ENCODE measurements at regions of chr6 and their contacts with region 1.

Region 1: GRCh38 chr6:21593412-21593926 is at the start of gene SOX4:
- DNase-seq: peak; percentile 27 to 80 (median 65)
- ATAC-seq: peak; percentile 78
- H3K4me3 ChIP-seq: peak within 1 kb of the TSS; percentile 59
- H3K4me3 Mint-ChIP-seq: peak within 1 kb of the TSS in 6 of 10 donors; percentile 89 to 93 (median 92)
- H3K27ac ChIP-seq: peak within 1 kb of the TSS; percentile 41
- H3K27ac Mint-ChIP-seq: peak within 1 kb of the TSS in 6 of 9 donors; percentile 43 to 87 (median 80)
- H3K4me1 ChIP-seq: peaks cover 18 to 21% of the 10 kb centered on the region in 2 donors
- H3K4me1 Mint-ChIP-seq: peaks cover 12 to 31% (median 27%) of the 10 kb centered on the region in 7 donors
- H3K27me3 ChIP-seq: peaks cover 10 to 28% of the 10 kb centered on the region in 2 donors
- H3K27me3 Mint-ChIP-seq: peaks cover 40 to 51% (median 45%) of the 10 kb centered on the region in 5 donors
- total RNA-seq, gene SOX4: 0.73 to 11.0 (median 1.4) TPM

Region 2: DNA sequence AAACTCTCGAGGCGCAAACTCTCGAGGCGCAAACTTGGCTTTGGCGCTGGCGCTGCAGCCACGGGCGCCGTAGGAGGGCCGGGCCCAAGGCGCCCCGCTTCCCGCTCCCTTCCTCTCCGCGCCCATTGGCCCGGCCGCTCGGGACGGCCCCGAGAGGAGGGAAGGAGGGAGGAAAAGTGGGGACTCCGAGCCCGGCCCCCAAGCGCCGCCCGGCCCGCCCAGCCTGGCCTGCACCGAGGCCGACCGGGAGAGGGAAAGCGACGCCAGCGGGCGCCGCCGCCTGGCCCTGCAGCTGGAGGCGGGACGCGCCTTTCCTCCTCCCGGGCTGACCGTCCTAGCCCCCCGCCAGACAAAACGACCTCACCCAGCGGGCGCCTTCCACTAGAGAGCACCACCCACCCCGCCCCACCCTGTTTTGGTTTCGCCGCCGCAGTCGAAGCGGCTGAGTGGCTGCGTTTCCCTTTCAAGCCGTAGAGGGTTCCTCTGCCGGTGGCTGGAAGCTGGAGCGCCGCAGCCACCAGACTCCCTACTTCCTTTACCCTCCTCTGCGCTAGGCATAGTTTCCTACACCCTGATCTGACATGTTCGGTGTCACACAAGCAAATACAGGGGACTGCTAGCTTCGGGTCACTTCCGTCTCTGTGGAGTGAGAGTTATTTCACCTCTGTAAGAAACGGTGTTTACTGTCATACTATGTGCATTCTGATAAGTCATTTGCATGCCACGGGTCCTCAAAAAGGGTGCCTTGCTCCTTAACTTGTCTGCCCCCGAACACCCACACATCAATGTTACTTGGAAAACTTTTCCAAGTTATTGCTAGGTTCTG is 1380.9 kb before region 1 on chr6 and contains the start of gene MBOAT1:
- CTCF ChIA-PET with region 1: no interaction called
- POLR2A ChIA-PET with region 1: no interaction called
- intact Hi-C with region 1: loop called (anchors 2 to 5 kb)
- DNase-seq: peak; percentile 38 to 85 (median 54)
- ATAC-seq: peak; percentile 82
- H3K4me3 ChIP-seq: peak within 1 kb of the TSS; percentile 73
- H3K4me3 Mint-ChIP-seq: peak within 1 kb of the TSS; percentile 82 to 99 (median 96)
- H3K27ac ChIP-seq: peak within 1 kb of the TSS; percentile 62
- H3K27ac Mint-ChIP-seq: peak within 1 kb of the TSS; percentile 56 to 94 (median 91)
- H3K4me1 ChIP-seq: peaks cover 11 to 20% of the 10 kb centered on the region in 2 donors
- H3K4me1 Mint-ChIP-seq: peaks cover 18 to 41% (median 27%) of the 10 kb centered on the region in 7 donors
- H3K27me3 ChIP-seq: no peaks in the 10 kb centered on the region
- H3K27me3 Mint-ChIP-seq: peaks cover 0 to 5% (median 0%) of the 10 kb centered on the region in 5 donors
- total RNA-seq, gene MBOAT1: 6.2 to 24.7 (median 10.0) TPM

Region 3: GRCh38 chr6:20564269-20564668 is 1029.2 kb before region 1 on chr6:
- CTCF ChIA-PET with region 1: interaction called, 38 read pairs
- POLR2A ChIA-PET with region 1: no interaction called
- intact Hi-C with region 1: loop called (anchors 1 kb)
- DNase-seq: peak in 5 of 9 donors; percentile 25 to 38 (median 36)
- ATAC-seq: no peak
- H3K4me3 ChIP-seq: no peak overlapping the region
- H3K4me3 Mint-ChIP-seq: no peak overlapping the region
- H3K27ac ChIP-seq: no peak overlapping the region
- H3K27ac Mint-ChIP-seq: no peak overlapping the region
- H3K4me1 ChIP-seq: no peaks in the 10 kb centered on the region
- H3K4me1 Mint-ChIP-seq: peaks cover 5 to 20% (median 10%) of the 10 kb centered on the region in 7 donors
- H3K27me3 ChIP-seq: no peaks in the 10 kb centered on the region
- H3K27me3 Mint-ChIP-seq: no peaks in the 10 kb centered on the region

Region 4: GRCh38 chr6:21402368-21402767 is 191.1 kb before region 1 on chr6:
- CTCF ChIA-PET with region 1: no interaction called
- POLR2A ChIA-PET with region 1: no interaction called
- intact Hi-C with region 1: no loop called
- DNase-seq: peak in 1 of 9 donors; percentile 22
- ATAC-seq: no peak
- H3K4me3 ChIP-seq: no peak overlapping the region
- H3K4me3 Mint-ChIP-seq: no peak overlapping the region
- H3K27ac ChIP-seq: no peak overlapping the region
- H3K27ac Mint-ChIP-seq: no peak overlapping the region
- H3K4me1 ChIP-seq: no peaks in the 10 kb centered on the region
- H3K4me1 Mint-ChIP-seq: peaks cover 0 to 8% (median 0%) of the 10 kb centered on the region in 7 donors
- H3K27me3 ChIP-seq: peaks cover 0 to 2% of the 10 kb centered on the region in 2 donors
- H3K27me3 Mint-ChIP-seq: peaks cover 0 to 9% (median 4%) of the 10 kb centered on the region in 5 donors

Region 5: DNA sequence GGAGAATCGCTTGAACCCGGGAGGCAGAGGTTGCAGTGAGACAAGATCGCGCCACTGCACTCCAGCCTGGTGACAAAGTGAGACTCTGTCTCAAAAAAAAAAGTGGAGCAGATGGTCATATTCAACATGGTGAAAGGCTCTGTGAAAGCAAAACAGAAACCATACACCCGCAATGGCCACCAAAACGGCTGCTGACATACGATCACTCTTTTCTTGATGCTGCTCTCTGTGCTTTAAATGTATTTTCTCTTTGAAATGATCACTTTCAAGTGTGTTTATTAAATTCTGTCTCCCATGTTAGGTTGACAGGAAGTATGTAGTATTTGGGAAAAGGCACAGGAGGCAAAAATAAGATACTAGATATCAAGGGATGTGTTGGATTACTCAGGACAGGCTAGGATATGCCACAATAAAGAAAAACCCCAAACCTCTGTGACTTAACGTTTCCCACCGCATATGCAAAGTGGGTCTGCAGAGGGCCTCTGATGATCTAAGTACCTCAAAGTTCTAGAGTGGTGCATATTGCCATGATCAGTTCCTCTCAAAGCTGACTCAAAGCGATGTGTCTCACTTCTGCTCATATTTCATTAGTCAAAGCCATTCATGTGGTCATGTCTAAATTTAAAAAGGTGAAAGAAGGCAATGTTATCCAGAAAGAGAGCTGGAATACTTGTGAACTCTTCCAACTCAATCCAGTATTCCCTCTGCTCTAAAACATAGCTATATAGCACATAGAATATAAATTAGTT is 155.1 kb before region 1 on chr6:
- CTCF ChIA-PET with region 1: no interaction called
- POLR2A ChIA-PET with region 1: no interaction called
- intact Hi-C with region 1: loop called in 1 of 2 experiments (anchors 2 kb)
- DNase-seq: peak in 3 of 9 donors; percentile 4 to 59 (median 7)
- ATAC-seq: peak; percentile 58
- H3K4me3 ChIP-seq: no peak overlapping the region
- H3K4me3 Mint-ChIP-seq: peak overlapping the region in 1 of 10 donors; percentile 66
- H3K27ac ChIP-seq: no peak overlapping the region
- H3K27ac Mint-ChIP-seq: peak overlapping the region in 1 of 9 donors; percentile 75
- H3K4me1 ChIP-seq: no peaks in the 10 kb centered on the region
- H3K4me1 Mint-ChIP-seq: peaks cover 5 to 23% (median 14%) of the 10 kb centered on the region in 7 donors
- H3K27me3 ChIP-seq: no peaks in the 10 kb centered on the region
- H3K27me3 Mint-ChIP-seq: peaks cover 0 to 15% (median 0%) of the 10 kb centered on the region in 5 donors

Region 6: DNA sequence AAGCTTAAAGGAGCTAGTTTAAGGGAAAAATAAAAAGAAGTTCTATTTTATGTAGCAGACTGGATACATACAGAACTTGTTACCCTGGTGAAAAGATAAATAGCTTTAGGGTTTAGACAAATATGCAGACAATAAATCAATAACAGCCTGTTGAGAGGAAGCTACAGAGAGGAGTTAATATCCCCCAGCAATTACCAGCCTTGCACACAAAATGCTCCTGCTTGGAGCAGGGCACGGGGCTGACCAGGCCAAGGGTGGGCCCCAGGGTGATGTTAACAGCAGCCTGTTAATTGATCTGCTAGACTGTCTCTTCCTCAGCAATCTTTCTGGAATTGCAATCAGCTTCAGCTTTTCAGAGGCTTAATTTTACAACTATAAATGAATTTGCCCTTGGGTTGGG is 125.0 kb before region 1 on chr6:
- CTCF ChIA-PET with region 1: no interaction called
- POLR2A ChIA-PET with region 1: no interaction called
- intact Hi-C with region 1: no loop called
- DNase-seq: no peak
- ATAC-seq: no peak
- H3K4me3 ChIP-seq: no peak overlapping the region
- H3K4me3 Mint-ChIP-seq: no peak overlapping the region
- H3K27ac ChIP-seq: no peak overlapping the region
- H3K27ac Mint-ChIP-seq: no peak overlapping the region
- H3K4me1 ChIP-seq: no peaks in the 10 kb centered on the region
- H3K4me1 Mint-ChIP-seq: no peaks in the 10 kb centered on the region
- H3K27me3 ChIP-seq: no peaks in the 10 kb centered on the region
- H3K27me3 Mint-ChIP-seq: peaks cover 0 to 10% (median 0%) of the 10 kb centered on the region in 5 donors

Region 7: GRCh38 chr6:21648475-21649130 is 55.1 kb after region 1 on chr6:
- CTCF ChIA-PET with region 1: no interaction called
- POLR2A ChIA-PET with region 1: no interaction called
- intact Hi-C with region 1: no loop called
- DNase-seq: no peak
- ATAC-seq: no peak
- H3K4me3 ChIP-seq: no peak overlapping the region
- H3K4me3 Mint-ChIP-seq: no peak overlapping the region
- H3K27ac ChIP-seq: no peak overlapping the region
- H3K27ac Mint-ChIP-seq: no peak overlapping the region
- H3K4me1 ChIP-seq: no peaks in the 10 kb centered on the region
- H3K4me1 Mint-ChIP-seq: no peaks in the 10 kb centered on the region
- H3K27me3 ChIP-seq: no peaks in the 10 kb centered on the region
- H3K27me3 Mint-ChIP-seq: peaks cover 0 to 34% (median 7%) of the 10 kb centered on the region in 5 donors

Region 8: GRCh38 chr6:21664314-21665109 is 71.0 kb after region 1 on chr6:
- CTCF ChIA-PET with region 1: no interaction called
- POLR2A ChIA-PET with region 1: no interaction called
- intact Hi-C with region 1: loop called in 1 of 2 experiments (anchors 5 kb)
- DNase-seq: peak in 2 of 9 donors; percentile 21 to 32
- ATAC-seq: peak; percentile 39
- H3K4me3 ChIP-seq: no peak overlapping the region
- H3K4me3 Mint-ChIP-seq: peak overlapping the region in 9 of 10 donors; percentile 57 to 77 (median 72)
- H3K27ac ChIP-seq: no peak overlapping the region
- H3K27ac Mint-ChIP-seq: no peak overlapping the region
- H3K4me1 ChIP-seq: no peaks in the 10 kb centered on the region
- H3K4me1 Mint-ChIP-seq: peaks cover 9 to 36% (median 24%) of the 10 kb centered on the region in 7 donors
- H3K27me3 ChIP-seq: peaks cover 0 to 8% of the 10 kb centered on the region in 2 donors
- H3K27me3 Mint-ChIP-seq: peaks cover 60 to 78% (median 68%) of the 10 kb centered on the region in 5 donors

Region 9: GRCh38 chr6:21935561-21936028 is 342.1 kb after region 1 on chr6:
- CTCF ChIA-PET with region 1: no interaction called
- POLR2A ChIA-PET with region 1: no interaction called
- intact Hi-C with region 1: loop called in 1 of 2 experiments (anchors 5 kb)
- DNase-seq: no peak
- ATAC-seq: no peak
- H3K4me3 ChIP-seq: no peak overlapping the region
- H3K4me3 Mint-ChIP-seq: no peak overlapping the region
- H3K27ac ChIP-seq: no peak overlapping the region
- H3K27ac Mint-ChIP-seq: no peak overlapping the region
- H3K4me1 ChIP-seq: no peaks in the 10 kb centered on the region
- H3K4me1 Mint-ChIP-seq: no peaks in the 10 kb centered on the region
- H3K27me3 ChIP-seq: no peaks in the 10 kb centered on the region
- H3K27me3 Mint-ChIP-seq: peaks cover 0 to 5% (median 0%) of the 10 kb centered on the region in 5 donors